MCF 10A (cell line): ENCODE measurements at regions of chr5 and their contacts with region 1.

Region 1: GRCh38 chr5:35230038-35230631 is at the start of gene PRLR:
- DNase-seq: peak; percentile 85
- H3K4me3 Mint-ChIP-seq: peak within 1 kb of the TSS; percentile 64
- H3K27ac Mint-ChIP-seq: no peak within 1 kb of the TSS
- H3K4me1 Mint-ChIP-seq: peaks cover 18% of the 10 kb centered on the region
- H3K27me3 Mint-ChIP-seq: peaks cover 39% of the 10 kb centered on the region
- CTCF ChIP-seq: no peak
- total RNA-seq, gene PRLR: 0.16 and 0.44 TPM in 2 replicates

Region 2: DNA sequence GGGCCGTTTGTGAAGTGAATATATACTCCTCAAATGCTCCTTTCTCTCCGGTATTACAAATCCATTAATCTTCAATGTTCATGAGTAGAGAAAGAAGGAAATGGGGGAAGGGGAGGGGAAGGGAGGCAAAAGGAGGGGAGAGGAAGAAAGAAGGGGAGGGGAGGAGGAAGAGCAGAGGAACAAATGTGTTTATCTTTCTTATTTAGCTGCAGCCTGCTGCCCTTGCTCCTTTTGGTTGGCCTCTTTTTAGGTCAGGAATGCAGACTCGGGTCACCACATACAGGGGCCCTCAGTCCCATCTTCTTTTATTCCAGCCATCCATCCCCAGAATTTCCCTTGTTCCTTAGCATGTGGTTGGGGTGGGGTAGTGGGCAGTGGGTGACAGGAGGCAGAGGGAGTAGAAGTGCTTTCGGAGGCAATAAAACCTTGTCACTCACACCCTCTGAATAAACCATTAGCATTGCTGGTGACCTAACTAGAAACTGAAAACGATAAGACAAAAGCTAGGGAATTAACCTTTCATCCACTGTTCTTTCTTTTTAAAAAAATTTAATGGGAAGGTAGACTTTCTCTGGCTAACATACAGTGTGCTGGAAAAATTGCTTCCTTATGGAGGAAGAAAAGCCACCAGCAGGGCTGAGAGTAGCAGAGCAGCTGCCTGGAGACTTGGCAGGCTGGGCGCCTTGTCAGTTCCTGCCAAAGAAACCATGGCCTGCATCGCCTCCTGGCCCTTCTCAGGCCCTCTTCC is 16.9 kb after region 1 on chr5:
- CTCF ChIA-PET with region 1: interaction called, 4 read pairs
- POLR2A ChIA-PET with region 1: interaction called, 3 read pairs
- intact Hi-C with region 1: loop called (anchors 2 kb)
- DNase-seq: no peak
- H3K4me3 Mint-ChIP-seq: no peak overlapping the region
- H3K27ac Mint-ChIP-seq: no peak overlapping the region
- H3K4me1 Mint-ChIP-seq: peaks cover 16% of the 10 kb centered on the region
- H3K27me3 Mint-ChIP-seq: no peaks in the 10 kb centered on the region
- CTCF ChIP-seq: no peak

Region 3: GRCh38 chr5:35436410-35437057 is 206.4 kb after region 1 on chr5:
- CTCF ChIA-PET with region 1: interaction called, 6 read pairs
- POLR2A ChIA-PET with region 1: interaction called, 6 read pairs
- intact Hi-C with region 1: loop called (anchors 1 kb)
- DNase-seq: peak; percentile 77
- H3K4me3 Mint-ChIP-seq: no peak overlapping the region
- H3K27ac Mint-ChIP-seq: no peak overlapping the region
- H3K4me1 Mint-ChIP-seq: peaks cover 5% of the 10 kb centered on the region
- H3K27me3 Mint-ChIP-seq: peaks cover 30% of the 10 kb centered on the region
- CTCF ChIP-seq: peak; percentile 68

Region 4: GRCh38 chr5:35598707-35599370 is 368.7 kb after region 1 on chr5:
- CTCF ChIA-PET with region 1: no interaction called
- POLR2A ChIA-PET with region 1: no interaction called
- intact Hi-C with region 1: loop called (anchors 1 kb)
- DNase-seq: peak; percentile 24
- H3K4me3 Mint-ChIP-seq: no peak overlapping the region
- H3K27ac Mint-ChIP-seq: no peak overlapping the region
- H3K4me1 Mint-ChIP-seq: no peaks in the 10 kb centered on the region
- H3K27me3 Mint-ChIP-seq: no peaks in the 10 kb centered on the region
- CTCF ChIP-seq: peak; percentile 15

Region 5: GRCh38 chr5:35651002-35651756 is 421.0 kb after region 1 on chr5:
- CTCF ChIA-PET with region 1: interaction called, 3 read pairs
- POLR2A ChIA-PET with region 1: no interaction called
- intact Hi-C with region 1: loop called (anchors 1 kb)
- DNase-seq: peak; percentile 68
- H3K4me3 Mint-ChIP-seq: no peak overlapping the region
- H3K27ac Mint-ChIP-seq: no peak overlapping the region
- H3K4me1 Mint-ChIP-seq: no peaks in the 10 kb centered on the region
- H3K27me3 Mint-ChIP-seq: no peaks in the 10 kb centered on the region
- CTCF ChIP-seq: peak; percentile 49

Region 6: GRCh38 chr5:35777358-35778087 is 547.4 kb after region 1 on chr5:
- CTCF ChIA-PET with region 1: no interaction called
- POLR2A ChIA-PET with region 1: no interaction called
- intact Hi-C with region 1: loop called (anchors 5 kb)
- DNase-seq: peak; percentile 87
- H3K4me3 Mint-ChIP-seq: no peak overlapping the region
- H3K27ac Mint-ChIP-seq: no peak overlapping the region
- H3K4me1 Mint-ChIP-seq: peaks cover 34% of the 10 kb centered on the region
- H3K27me3 Mint-ChIP-seq: no peaks in the 10 kb centered on the region
- CTCF ChIP-seq: peak; percentile 47